ENCODE measurements at regions of chr15 and their contacts with region 1.

Region 1: DNA sequence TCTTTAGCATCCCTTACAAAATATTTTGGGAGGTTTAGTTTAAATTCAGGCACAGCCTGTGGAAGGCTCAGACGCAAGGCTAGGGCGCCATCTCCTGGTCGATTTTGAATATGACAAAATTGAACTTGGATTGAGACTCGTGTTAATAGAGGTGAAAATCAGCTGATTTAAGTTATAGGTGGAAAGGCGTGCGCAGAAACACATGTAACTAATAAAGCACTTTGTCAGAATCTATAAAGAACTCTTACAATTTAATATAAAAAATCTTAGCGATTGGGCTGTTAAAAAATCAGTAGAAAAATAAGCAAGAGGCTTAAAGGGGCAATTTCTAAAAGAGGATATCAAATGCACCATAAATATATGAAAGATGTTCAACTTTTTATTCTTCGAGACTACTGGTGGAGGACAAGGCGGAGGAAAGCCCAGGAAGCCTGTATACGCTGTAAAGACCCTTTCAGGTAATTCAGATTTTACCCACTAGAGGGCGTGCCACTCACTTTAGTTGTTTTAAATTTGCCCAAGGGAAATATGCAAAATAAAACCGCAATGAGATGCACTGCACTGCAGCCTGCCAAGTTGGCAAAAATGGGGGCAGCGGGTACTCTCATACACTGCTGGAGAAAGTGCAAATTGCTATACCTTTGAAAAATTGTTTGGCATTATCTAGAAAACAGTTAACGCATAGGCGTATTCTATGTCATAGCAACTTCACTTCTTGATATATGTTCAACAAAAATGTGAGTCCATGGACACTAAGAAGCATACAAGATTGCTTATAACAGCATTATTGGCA is 64.7 kb downstream of the SLC30A4 start:
- DNase-seq: peak; percentile 81

Region 2: GRCh38 chr15:45166834-45167630 is 290.8 kb before region 1 on chr15:
- intact Hi-C with region 1: loop called (anchors 2 kb)
- DNase-seq: peak; percentile 93

Region 3: GRCh38 chr15:45391746-45392583 is 65.9 kb before region 1 on chr15:
- intact Hi-C with region 1: no loop called
- DNase-seq: no peak

Region 4: GRCh38 chr15:45429974-45430792 is 27.7 kb before region 1 on chr15:
- intact Hi-C with region 1: loop called (anchors 1 kb)
- DNase-seq: peak; percentile 91

Region 5: DNA sequence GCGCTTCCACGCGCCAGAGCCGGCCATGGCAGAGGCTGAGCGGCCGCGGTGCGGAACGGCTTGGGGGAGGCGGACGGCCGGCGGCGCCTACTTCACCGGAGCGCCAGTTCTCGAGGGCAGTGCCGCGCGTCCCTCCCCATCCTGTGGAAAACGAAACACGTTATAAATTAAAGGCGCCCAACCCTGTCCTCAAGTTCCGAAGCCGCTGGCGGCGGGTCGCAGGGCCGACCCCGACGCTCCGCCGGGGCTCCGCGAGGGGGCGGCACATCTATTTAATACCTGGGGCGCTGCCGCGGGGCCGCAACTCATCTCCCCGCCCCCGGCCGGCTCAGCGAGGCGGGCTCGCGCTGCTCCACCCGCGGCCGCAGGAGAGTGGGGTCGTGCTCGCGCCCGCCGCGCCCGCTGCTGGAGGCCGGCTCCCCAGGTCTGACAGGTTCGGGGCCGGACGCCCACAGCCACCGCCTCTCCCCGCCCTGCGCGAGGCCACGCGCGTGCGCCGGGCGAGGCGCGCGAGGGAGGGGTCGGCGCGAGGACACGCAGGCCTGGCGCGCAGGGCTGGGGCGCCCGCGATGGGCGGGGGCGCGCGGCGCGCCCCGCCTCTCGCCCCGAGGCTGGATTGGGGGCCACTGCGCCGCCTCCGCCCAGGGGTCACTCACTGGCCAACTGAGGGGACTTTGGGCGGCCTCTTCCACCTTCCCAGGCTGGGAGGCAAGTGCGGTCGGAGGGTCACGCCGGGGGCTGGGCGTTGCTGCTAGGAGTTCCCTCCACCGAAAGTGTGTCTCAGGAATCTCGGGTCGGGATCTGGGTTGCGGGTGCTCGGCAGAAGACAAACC is 64.7 kb after region 1 on chr15 and contains the start of gene SLC30A4:
- intact Hi-C with region 1: loop called (anchors 1 kb)
- DNase-seq: peak; percentile 81
- total RNA-seq, gene SLC30A4: 3.3 TPM

Region 6: GRCh38 chr15:45611305-45611704 is 153.5 kb after region 1 on chr15:
- intact Hi-C with region 1: loop called (anchors 1 kb)
- DNase-seq: no peak

Measured in cardiac septum (tissue), 1 donor.